ENCODE measurements at regions of chr3 and their contacts with region 1.

Region 1: DNA sequence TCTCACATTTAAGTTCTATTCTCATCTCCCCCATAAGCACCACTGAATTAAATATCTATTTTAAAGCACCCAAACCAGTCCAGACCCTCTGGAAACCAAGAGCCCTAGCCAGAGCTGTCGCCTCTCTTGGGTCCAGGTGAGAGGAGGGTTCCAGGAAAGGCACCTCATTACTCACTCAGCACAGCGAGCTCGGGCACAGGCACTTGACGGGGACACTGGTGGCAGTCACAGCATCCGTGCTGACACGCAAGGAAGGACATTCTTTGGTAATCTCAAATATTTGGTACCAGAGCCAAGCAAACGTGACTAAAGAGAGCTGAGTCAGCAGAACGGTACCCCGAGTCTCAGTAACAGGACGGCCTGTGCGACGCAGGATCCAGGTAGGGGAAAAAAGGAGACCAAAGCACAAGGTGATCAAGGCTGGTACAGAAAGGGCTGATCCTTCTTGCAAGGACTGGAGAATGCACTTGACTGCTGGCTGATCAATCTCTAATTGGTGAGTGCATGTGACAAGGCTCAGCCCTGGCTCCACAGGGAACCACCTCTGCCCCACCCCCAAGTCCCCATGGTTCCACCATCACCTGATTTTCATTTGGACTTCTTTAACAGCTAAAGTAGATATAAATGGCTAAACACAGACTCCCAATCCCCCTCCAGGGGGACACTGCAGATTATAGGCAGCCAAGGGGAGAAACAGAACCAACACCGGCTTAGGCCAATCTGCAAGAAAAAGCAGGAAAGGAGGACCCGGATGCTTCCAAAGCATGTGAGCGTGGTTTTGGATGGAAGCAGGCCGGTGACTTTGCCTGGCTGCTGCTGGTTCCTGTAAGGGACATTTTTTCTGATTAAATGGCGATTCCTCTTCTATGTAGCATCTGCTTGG is 61.4 kb downstream of the CHCHD6 start:
- DNase-seq: no peak
- ATAC-seq: no peak

Region 2: GRCh38 chr3:126704463-126705214 is 60.8 kb before region 1 on chr3:
- intact Hi-C with region 1: no loop called
- DNase-seq: no peak
- ATAC-seq: peak; percentile 4 to 6

Region 3: DNA sequence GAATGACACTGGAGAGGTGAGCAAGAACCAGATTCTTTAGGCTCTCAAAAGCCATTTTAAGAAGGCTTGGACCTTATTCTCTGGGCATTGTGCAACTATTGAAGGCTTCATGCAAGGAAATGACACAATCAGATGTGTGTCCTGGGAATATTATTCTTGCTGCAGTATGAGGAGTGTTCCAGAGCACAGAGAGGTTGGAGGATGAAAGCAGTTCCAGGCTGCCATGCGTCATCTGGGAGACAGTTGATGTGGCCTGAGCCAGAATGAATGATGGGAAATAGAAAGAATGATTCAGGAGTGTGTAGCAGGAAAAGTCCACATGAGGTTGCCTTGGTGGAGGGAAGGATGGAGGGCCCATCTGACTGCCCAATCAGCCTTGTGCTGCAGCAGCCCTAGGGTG is 61.7 kb after region 1 on chr3:
- intact Hi-C with region 1: loop called in 1 of 2 experiments (anchors 10 kb)
- DNase-seq: peak; percentile 62
- ATAC-seq: peak; percentile 84 to 87

Measured in left cardiac atrium (tissue), 4 donors.